ENCODE measurements at regions of chr2 and their contacts with region 1.

Region 1: DNA sequence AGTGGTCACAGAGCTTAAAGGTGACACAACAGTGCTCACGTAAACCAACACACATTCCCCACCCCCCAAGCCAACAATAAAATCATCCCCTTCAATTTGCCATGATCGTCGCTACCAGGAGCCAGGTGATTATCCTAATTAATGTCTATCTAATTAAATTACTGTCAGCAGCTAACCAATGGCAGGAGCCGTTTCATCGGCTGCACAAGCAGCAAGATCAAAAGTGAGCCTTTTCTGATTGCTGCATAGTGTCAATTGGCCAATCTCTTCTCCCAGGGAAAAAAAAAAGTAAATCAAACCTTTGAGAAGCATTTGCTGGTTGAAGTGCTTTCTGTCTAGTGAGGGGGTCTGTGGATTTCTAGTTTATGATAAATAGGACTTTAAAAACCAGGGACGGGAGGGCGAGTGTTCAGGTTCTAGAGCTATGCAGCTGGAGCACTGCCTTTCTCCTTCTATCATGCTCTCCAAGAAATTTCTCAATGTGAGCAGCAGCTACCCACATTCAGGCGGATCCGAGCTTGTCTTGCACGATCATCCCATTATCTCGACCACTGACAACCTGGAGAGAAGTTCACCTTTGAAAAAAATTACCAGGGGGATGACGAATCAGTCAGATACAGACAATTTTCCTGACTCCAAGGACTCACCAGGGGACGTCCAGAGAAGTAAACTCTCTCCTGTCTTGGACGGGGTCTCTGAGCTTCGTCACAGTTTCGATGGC is at the start of gene TBR1:
- DNase-seq: no peak
- H3K4me3 ChIP-seq: peak within 1 kb of the TSS; percentile 51
- H3K4me3 Mint-ChIP-seq: peak within 1 kb of the TSS; percentile 71
- H3K27ac Mint-ChIP-seq: peak within 1 kb of the TSS; percentile 5
- H3K4me1 ChIP-seq: peaks cover 18% of the 10 kb centered on the region
- H3K4me1 Mint-ChIP-seq: peaks cover 34% of the 10 kb centered on the region
- H3K27me3 ChIP-seq: peaks cover 6% of the 10 kb centered on the region
- H3K27me3 Mint-ChIP-seq: peaks cover 41% of the 10 kb centered on the region
- CTCF ChIP-seq: no peak
- total RNA-seq, gene TBR1: 0.07 and 0.11 TPM in 2 replicates

Region 2: DNA sequence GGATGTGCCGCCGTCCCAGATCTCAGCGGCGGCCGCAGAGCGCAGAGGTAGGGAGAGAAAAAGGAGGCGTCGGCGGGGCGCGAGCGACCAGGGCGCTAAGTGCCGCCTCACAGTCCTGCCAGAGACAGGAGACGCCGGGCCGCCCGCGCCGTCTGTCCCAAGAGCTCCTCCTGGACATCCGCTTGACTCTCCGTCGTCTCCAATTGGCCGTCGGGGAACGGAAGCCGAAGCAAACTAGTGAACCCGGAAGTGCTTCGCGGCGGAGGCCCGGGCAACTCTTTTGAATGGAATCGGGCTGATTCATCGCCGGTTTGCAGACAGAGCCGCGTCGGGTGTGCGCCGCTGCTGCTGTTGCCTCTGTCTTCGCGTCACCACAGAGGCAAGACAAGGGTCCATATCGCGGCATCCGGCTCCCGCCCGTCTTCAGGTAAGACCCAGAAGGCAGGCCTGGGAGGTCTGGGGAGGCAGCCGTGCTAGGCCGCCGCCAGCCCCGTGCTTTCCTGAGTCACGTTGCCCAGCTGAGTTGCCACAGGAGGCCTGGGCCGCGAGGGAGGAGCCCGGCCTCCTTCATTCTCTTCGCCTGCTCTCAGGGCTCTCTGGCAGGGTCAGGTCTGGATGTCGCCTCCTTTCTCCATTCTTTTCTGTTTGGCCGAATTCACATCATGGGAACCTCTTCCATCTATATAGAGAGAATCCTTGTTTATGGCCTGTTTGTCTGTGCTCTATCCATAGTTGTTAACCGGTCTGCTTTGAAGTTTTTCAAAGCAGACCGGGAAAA is 107.8 kb before region 1 on chr2 and contains the start of gene PSMD14:
- CTCF ChIA-PET with region 1: interaction called, 4 read pairs
- POLR2A ChIA-PET with region 1: no interaction called
- intact Hi-C with region 1: loop called (anchors 2 kb)
- DNase-seq: peak; percentile 93 to 95
- H3K4me3 ChIP-seq: peak within 1 kb of the TSS; percentile 88
- H3K4me3 Mint-ChIP-seq: peak within 1 kb of the TSS; percentile 98
- H3K27ac Mint-ChIP-seq: peak within 1 kb of the TSS; percentile 98
- H3K4me1 ChIP-seq: peaks cover 5% of the 10 kb centered on the region
- H3K4me1 Mint-ChIP-seq: peaks cover 13% of the 10 kb centered on the region
- H3K27me3 ChIP-seq: no peaks in the 10 kb centered on the region
- H3K27me3 Mint-ChIP-seq: no peaks in the 10 kb centered on the region
- CTCF ChIP-seq: no peak
- total RNA-seq, gene PSMD14: 81.1 and 85.3 TPM in 2 replicates

Measured in Caco-2 (cell line).